Brain microvascular endothelial cell (primary cell): ENCODE measurements at regions of chr3 and their contacts with region 1.

Region 1: GRCh38 chr3:128794770-128795649 is 69.0 kb downstream of the RAB7A start:
- DNase-seq: peak; percentile 64
- H3K4me3 ChIP-seq: no peak overlapping the region
- H3K27ac ChIP-seq: no peak overlapping the region
- H3K27me3 ChIP-seq: no peaks in the 10 kb centered on the region
- CTCF ChIP-seq: peak; percentile 84

Region 2: DNA sequence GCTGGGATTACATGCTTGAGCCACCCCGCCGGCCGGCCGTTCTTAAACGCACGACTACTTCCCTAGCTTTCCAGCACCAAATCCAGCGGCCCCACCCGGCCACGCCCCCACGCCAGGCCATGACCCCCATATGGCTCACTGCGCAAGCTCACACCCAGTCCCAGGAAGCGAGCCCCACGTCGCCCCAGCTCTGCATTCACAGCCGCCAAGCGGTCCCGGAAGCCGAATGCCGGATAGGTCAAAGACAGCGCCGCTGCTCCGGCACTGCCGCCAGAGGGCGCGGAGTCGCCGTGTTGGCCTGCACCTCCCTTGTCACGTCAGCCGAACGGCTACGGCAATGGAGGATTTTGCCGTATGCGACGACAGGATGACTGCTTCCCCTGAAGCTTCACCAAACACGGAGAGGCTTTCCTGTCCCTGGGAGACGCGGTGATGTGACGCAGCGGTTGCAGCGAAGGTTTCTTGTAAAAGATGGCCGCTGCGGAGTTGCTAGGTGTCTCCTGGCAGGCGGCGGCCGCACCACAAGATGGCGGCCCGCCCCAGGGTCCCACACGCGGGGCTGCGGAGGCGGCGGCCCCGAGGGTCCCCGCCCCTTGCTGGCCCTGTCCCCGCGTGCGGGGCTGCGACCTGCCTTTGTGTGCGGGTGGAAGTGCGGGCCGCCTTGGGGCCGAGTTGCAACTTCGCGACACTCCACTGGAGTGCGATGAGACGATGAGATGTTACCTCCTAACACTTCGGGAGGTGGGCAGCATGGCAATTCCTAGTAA is 114.2 kb before region 1 on chr3:
- in situ Hi-C with region 1: loop called (anchors 25 kb)
- DNase-seq: peak; percentile 98
- H3K4me3 ChIP-seq: peak overlapping the region; percentile 85
- H3K27ac ChIP-seq: peak overlapping the region; percentile 93
- H3K27me3 ChIP-seq: no peaks in the 10 kb centered on the region
- CTCF ChIP-seq: peak; percentile 100

Region 3: DNA sequence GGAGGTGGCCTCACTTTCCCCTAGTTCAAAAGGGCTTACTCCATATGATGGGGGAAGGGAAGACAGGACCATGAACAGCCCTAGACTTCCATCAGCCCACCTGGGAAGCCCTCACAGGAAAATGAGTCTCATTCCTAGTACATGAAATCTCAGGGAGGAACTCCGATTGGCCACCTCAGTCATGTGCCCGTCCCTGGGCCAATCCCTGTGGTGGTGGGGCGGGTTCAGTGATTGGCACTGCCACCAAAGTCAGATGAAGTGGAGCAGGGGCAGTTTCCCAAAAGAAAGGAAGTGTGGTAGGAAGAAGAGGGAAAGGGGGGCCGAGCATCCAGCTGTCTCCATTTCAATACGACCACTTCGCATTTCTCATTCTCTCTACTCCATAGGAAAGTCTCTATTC is 239.6 kb after region 1 on chr3:
- in situ Hi-C with region 1: no loop called
- DNase-seq: no peak
- H3K4me3 ChIP-seq: no peak overlapping the region
- H3K27ac ChIP-seq: no peak overlapping the region
- H3K27me3 ChIP-seq: peaks cover 12% of the 10 kb centered on the region
- CTCF ChIP-seq: no peak